Mammary epithelial cell (primary cell): ENCODE measurements at regions of chr1 and their contacts with region 1.

Region 1: DNA sequence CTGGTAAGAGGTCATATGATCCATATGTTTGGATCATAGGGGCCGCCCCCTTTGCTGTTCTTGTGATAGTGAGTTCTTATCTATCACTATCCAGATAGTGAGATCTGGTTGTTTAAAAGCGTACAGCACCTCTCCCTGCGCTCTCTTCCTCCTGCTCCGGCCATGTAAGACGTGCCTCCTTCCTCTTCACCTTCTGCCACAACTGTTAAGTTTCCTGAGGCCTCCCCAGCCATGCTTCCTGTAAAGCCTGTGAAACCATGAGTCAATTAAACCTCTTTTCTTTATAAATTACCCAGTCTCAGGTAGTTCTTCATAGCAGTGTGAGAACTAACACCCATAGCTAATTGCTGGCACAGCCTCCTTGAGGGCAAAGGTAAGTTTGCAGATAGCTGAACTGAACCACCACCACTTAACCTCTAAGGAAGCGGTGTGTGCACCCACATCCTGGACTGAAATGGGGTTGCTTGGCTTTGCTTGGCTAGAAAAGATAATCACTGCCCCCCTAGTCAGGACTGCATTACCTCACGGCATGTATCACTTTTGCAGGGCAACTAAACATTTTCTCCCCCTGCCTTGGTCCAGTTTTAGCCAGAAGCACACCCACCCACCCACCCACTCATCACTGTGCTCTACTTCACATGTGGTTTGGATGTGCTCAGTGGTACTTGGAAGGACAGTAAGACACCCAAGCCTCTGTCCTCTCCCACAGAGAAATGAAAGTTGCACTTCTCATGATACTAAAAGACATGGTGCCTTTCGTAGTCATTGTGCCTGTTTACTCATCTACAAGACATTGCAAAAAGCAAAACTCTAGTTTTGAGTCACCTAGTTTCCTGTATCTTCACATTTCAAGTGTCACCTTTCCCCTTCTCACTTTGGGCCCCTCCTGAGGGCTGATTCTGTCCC is 23.1 kb upstream of the PTAFR start:
- DNase-seq: no peak
- H3K4me3 ChIP-seq: no peak overlapping the region
- H3K27ac ChIP-seq: no peak overlapping the region
- H3K4me1 ChIP-seq: peaks cover 25% of the 10 kb centered on the region
- H3K27me3 ChIP-seq: no peaks in the 10 kb centered on the region
- CTCF ChIP-seq: no peak

Region 2: DNA sequence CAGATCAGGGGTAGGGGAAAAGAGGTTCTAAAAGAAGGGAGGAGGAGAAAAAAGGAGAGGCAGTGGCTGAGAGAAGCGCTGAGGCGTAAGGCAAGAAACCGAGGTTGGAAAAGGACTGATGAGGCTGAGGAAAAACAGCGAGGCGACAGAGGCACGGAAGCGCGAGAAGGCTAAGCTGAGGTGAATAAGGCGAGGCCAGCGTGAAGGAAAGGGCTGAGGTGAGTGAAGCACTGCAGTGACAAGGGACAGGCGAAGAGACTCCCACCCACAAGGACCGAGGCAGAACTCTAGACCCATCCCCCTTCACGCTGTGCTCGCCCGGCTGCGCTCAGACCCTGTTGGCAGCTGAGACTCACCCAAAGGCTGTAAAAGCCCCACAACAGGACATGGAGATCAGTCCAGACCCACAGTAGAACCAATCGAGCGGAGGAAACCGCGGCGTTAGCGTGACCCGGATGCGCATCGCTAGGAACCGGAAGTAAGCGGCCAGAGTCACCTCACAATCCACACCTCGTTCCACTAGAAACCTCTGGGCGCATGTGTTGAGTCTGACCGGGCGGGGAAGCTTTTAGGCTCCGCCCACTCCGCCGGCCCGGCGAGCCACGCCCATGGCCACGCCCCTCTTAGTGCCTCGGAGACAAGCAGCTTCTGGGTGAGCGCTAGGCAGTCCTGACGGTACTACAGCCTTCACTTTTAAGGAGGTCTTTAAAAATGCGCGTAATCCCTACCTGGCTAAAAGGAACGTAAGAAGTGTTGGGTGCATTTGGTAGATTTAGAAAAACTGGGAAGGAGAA is 111.2 kb before region 1 on chr1 and contains the start of gene EYA3:
- CTCF ChIA-PET with region 1: interaction called, 4 read pairs
- dilution Hi-C with region 1: no loop called
- in situ Hi-C with region 1: loop called in 1 of 2 experiments (anchors 5 kb)
- intact Hi-C with region 1: loop called (anchors 1 kb)
- DNase-seq: peak; percentile 98
- H3K4me3 ChIP-seq: peak within 1 kb of the TSS; percentile 74 to 85 (median 75)
- H3K27ac ChIP-seq: peak within 1 kb of the TSS; percentile 85
- H3K4me1 ChIP-seq: peaks cover 11% of the 10 kb centered on the region
- H3K27me3 ChIP-seq: no peaks in the 10 kb centered on the region
- CTCF ChIP-seq: no peak
- total RNA-seq, gene EYA3: 12.3 to 21.9 TPM

Region 3: GRCh38 chr1:28127617-28128257 is 71.8 kb before region 1 on chr1:
- CTCF ChIA-PET with region 1: no interaction called
- dilution Hi-C with region 1: loop called (anchors 5 kb)
- in situ Hi-C with region 1: no loop called
- intact Hi-C with region 1: loop called (anchors 2 kb)
- DNase-seq: no peak
- H3K4me3 ChIP-seq: no peak overlapping the region
- H3K27ac ChIP-seq: no peak overlapping the region
- H3K4me1 ChIP-seq: peaks cover 20% of the 10 kb centered on the region
- H3K27me3 ChIP-seq: no peaks in the 10 kb centered on the region
- CTCF ChIP-seq: no peak

Region 4: GRCh38 chr1:28135371-28136168 is 64.0 kb before region 1 on chr1:
- CTCF ChIA-PET with region 1: no interaction called
- dilution Hi-C with region 1: loop called (anchors 5 kb)
- in situ Hi-C with region 1: no loop called
- intact Hi-C with region 1: no loop called
- DNase-seq: peak; percentile 89
- H3K4me3 ChIP-seq: no peak overlapping the region
- H3K27ac ChIP-seq: peak overlapping the region; percentile 61
- H3K4me1 ChIP-seq: peaks cover 21% of the 10 kb centered on the region
- H3K27me3 ChIP-seq: no peaks in the 10 kb centered on the region
- CTCF ChIP-seq: no peak

Region 5: GRCh38 chr1:28160782-28161266 is 38.8 kb before region 1 on chr1:
- CTCF ChIA-PET with region 1: no interaction called
- dilution Hi-C with region 1: loop called (anchors 5 kb)
- in situ Hi-C with region 1: no loop called
- intact Hi-C with region 1: no loop called
- DNase-seq: peak; percentile 57
- H3K4me3 ChIP-seq: no peak overlapping the region
- H3K27ac ChIP-seq: no peak overlapping the region
- H3K4me1 ChIP-seq: peaks cover 7% of the 10 kb centered on the region
- H3K27me3 ChIP-seq: no peaks in the 10 kb centered on the region
- CTCF ChIP-seq: no peak